ENCODE measurements at regions of chr14 and their contacts with region 1.

Region 1: DNA sequence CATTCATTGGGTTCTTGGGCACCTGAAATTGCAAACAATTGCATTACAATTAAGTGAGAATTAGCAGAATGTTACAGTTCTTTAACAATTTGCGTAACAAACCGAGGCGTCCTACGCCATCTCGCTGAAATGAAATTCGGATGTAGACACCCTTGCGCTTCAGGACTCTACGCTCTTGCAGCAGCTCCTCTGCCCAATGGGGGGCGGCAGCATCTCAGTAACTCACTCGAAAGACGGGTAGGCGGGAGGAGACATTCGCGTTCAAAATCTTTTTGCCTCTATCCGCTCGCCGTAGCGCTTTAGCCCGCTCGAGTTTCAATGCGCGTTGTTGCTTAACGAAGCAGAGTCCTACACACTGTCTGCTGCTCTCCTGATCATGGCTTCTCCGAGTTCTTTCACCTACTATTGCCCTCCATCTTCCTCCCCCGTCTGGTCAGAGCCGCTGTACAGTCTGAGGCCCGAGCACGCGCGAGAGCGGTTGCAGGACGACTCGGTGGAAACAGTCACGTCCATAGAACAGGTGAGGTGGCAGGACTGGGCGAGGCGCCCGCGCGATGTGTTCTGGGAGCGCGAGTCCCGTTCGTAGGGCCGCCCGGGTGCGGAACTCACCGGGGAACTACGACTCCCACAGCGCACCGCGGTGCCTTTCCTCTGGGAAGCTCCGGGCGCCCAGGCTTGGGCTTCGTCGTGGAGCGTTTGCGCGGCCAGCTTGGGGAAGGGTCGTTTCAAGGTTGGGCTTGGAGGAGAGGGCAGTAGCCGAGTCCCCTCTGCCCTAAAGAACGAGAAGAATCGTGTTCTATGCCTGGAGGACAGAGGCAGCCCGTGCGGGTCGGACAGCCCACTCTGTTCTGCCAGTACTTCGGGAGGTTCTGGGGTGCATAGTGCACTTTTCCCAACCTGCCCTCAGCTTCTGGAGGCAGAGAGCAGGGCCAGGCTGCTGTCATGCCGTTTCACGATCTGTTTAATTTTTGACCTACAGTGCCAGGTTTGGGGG is at the start of gene FNTB:
- DNase-seq: peak; percentile 98
- H3K4me3 ChIP-seq: peak within 1 kb of the TSS; percentile 66 to 86 (median 72)
- H3K27ac ChIP-seq: peak within 1 kb of the TSS; percentile 79 to 89 (median 87)
- H3K4me1 ChIP-seq: peaks cover 9 to 39% (median 29%) of the 10 kb centered on the region in 4 donors
- H3K27me3 ChIP-seq: no peaks in the 10 kb centered on the region
- CTCF ChIP-seq: peak; percentile 79 to 90 (median 82)
- EP300 ChIP-seq: no peak
- POLR2A ChIP-seq: no peak
- total RNA-seq, gene FNTB: 10.3 to 20.7 (median 15.5) TPM

Region 2: DNA sequence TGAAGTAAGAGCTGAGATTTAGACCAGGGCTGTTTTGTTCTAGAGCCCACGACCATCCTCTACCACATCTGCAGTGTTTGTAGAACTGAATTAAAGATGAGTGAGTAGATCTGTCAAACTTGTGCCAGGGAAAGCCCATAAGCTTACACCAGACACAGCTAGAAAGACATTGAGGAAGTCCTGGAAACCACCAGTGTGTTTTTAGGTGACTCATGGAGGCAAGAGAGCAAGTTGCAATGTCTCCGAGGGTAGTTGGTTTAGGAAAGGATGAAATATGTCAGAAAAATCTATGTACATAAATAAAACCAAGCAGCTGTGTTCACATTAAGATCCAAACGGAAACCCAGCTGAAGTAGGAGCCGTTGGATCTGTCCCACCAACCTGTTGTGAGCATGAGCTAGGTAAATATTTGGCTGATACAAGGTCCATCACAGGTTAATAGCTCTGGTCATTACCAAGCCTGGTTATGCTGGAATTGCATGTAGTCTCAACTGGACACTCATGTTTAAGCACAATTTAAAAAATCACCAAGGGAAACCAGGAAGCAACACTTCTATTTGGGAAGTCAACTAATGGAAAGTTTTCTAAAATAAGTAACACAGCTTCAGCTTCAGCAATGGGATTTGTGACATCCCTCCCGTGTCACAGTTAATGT is 332.5 kb before region 1 on chr14:
- intact Hi-C with region 1: no loop called
- DNase-seq: no peak
- H3K4me3 ChIP-seq: no peak overlapping the region
- H3K27ac ChIP-seq: peak overlapping the region; percentile 69 to 79 (median 74)
- H3K4me1 ChIP-seq: peaks cover 3 to 31% (median 25%) of the 10 kb centered on the region in 4 donors
- H3K27me3 ChIP-seq: no peaks in the 10 kb centered on the region
- CTCF ChIP-seq: no peak
- EP300 ChIP-seq: no peak
- POLR2A ChIP-seq: no peak

Region 3: GRCh38 chr14:64823305-64823861 is 163.5 kb before region 1 on chr14:
- intact Hi-C with region 1: loop called (anchors 2 kb)
- DNase-seq: peak; percentile 94
- H3K4me3 ChIP-seq: peak overlapping the region in 1 of 4 donors; percentile 30
- H3K27ac ChIP-seq: no peak overlapping the region
- H3K4me1 ChIP-seq: peaks cover 7 to 19% (median 9%) of the 10 kb centered on the region in 4 donors
- H3K27me3 ChIP-seq: peaks cover 0 to 10% (median 0%) of the 10 kb centered on the region in 4 donors
- CTCF ChIP-seq: peak; percentile 74 to 86 (median 78)
- EP300 ChIP-seq: no peak
- POLR2A ChIP-seq: no peak

Region 4: GRCh38 chr14:64880221-64881121 is 106.4 kb before region 1 on chr14:
- intact Hi-C with region 1: no loop called
- DNase-seq: peak; percentile 68
- H3K4me3 ChIP-seq: peak overlapping the region; percentile 59 to 69 (median 65)
- H3K27ac ChIP-seq: no peak overlapping the region
- H3K4me1 ChIP-seq: peaks cover 13 to 22% (median 21%) of the 10 kb centered on the region in 4 donors
- H3K27me3 ChIP-seq: peaks cover 6 to 54% (median 30%) of the 10 kb centered on the region in 4 donors
- CTCF ChIP-seq: peak in 1 of 3 experiments; percentile 2
- EP300 ChIP-seq: no peak
- POLR2A ChIP-seq: no peak

Region 5: GRCh38 chr14:65019944-65020566 is 33.2 kb after region 1 on chr14:
- intact Hi-C with region 1: loop called (anchors 1 kb)
- DNase-seq: no peak
- H3K4me3 ChIP-seq: no peak overlapping the region
- H3K27ac ChIP-seq: peak overlapping the region in 1 of 4 donors; percentile 12
- H3K4me1 ChIP-seq: peaks cover 12 to 20% (median 15%) of the 10 kb centered on the region in 4 donors
- H3K27me3 ChIP-seq: no peaks in the 10 kb centered on the region
- CTCF ChIP-seq: peak; percentile 47 to 67 (median 51)
- EP300 ChIP-seq: no peak
- POLR2A ChIP-seq: no peak

Region 6: GRCh38 chr14:65102441-65103149 is 115.7 kb after region 1 on chr14 and contains the start of gene MAX:
- intact Hi-C with region 1: loop called (anchors 5 kb)
- DNase-seq: peak; percentile 99
- H3K4me3 ChIP-seq: peak within 1 kb of the TSS; percentile 92 to 98 (median 94)
- H3K27ac ChIP-seq: peak within 1 kb of the TSS; percentile 89 to 94 (median 92)
- H3K4me1 ChIP-seq: peaks cover 41 to 49% (median 46%) of the 10 kb centered on the region in 4 donors
- H3K27me3 ChIP-seq: no peaks in the 10 kb centered on the region
- CTCF ChIP-seq: no peak
- EP300 ChIP-seq: no peak
- POLR2A ChIP-seq: peak; percentile 57
- total RNA-seq, gene MAX: 69.3 to 88.0 (median 77.4) TPM

Region 7: DNA sequence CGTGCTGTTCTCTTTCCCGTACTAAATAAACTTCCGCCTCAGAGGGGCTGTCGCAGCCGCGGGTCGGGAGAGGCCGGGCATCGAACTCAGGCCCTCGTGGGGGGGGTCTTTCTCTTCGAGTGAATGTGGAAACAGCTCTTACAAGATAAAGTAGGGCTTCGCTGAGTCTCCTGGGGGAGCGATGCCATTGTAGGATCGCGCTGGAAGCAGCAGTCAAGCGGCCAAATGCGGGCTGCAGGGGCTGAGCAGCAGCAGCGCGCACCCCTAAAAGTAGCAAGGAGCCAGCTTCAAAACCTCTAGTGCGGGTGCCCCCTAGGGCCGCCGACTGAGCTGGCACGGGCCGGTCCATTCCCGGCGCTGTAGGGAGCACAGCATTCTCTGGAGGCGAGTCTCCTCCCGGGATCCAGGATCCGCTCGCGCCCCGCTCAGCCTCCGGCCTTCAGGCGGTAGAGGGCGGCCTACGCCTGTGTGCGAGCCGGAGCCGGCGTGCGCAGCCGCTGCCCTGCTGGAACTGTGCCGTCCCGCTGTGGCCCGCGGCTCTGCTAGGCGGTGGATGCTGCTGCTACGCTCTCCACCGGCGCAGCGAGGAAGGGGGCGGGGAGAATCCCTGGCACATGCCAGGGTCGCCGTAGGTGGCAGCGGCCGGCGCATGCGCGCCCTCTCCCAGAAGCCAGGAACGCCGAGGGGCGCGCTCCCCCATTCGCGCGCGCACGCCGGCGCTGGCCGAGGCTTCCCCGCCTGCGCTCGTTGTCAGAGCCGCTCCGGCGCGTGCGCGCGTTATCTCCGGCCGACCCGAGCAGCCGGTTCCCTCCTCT is 425.4 kb after region 1 on chr14 and contains the start of gene FUT8:
- intact Hi-C with region 1: loop called (anchors 5 kb)
- DNase-seq: peak; percentile 96
- H3K4me3 ChIP-seq: peak within 1 kb of the TSS; percentile 87 to 97 (median 92)
- H3K27ac ChIP-seq: peak within 1 kb of the TSS; percentile 94 to 97 (median 96)
- H3K4me1 ChIP-seq: peaks cover 19% of the 10 kb centered on the region in 4 donors
- H3K27me3 ChIP-seq: no peaks in the 10 kb centered on the region
- CTCF ChIP-seq: peak; percentile 63 to 71 (median 65)
- EP300 ChIP-seq: no peak
- POLR2A ChIP-seq: peak; percentile 59
- total RNA-seq, gene FUT8: 12.8 to 22.2 (median 20.1) TPM

Region 8: GRCh38 chr14:65824285-65824977 is 837.6 kb after region 1 on chr14:
- intact Hi-C with region 1: loop called (anchors 10 kb)
- DNase-seq: no peak
- H3K4me3 ChIP-seq: no peak overlapping the region
- H3K27ac ChIP-seq: no peak overlapping the region
- H3K4me1 ChIP-seq: no peaks in the 10 kb centered on the region
- H3K27me3 ChIP-seq: peaks cover 0 to 28% (median 0%) of the 10 kb centered on the region in 4 donors
- CTCF ChIP-seq: peak; percentile 83 to 96 (median 91)
- EP300 ChIP-seq: no peak
- POLR2A ChIP-seq: no peak

Measured in esophagus muscularis mucosa (tissue), 4 donors.